Activated naive CD4-positive, alpha-beta T cell treated with anti-CD3 and anti-CD28 coated beads for 36 hours (primary cell): ENCODE measurements at regions of chr12 and their contacts with region 1.

Region 1: GRCh38 chr12:48189331-48190125 is 6.1 kb downstream of the CCDC184 start:
- DNase-seq: peak; percentile 87
- H3K4me3 Mint-ChIP-seq: no peak overlapping the region
- H3K27ac Mint-ChIP-seq: no peak overlapping the region
- H3K4me1 Mint-ChIP-seq: peaks cover 3% of the 10 kb centered on the region
- H3K27me3 Mint-ChIP-seq: peaks cover 13% of the 10 kb centered on the region

Region 2: GRCh38 chr12:47433876-47434275 is 755.7 kb before region 1 on chr12:
- CTCF ChIA-PET with region 1: no interaction called
- intact Hi-C with region 1: no loop called
- DNase-seq: no peak
- H3K4me3 Mint-ChIP-seq: no peak overlapping the region
- H3K27ac Mint-ChIP-seq: no peak overlapping the region
- H3K4me1 Mint-ChIP-seq: peaks cover 2% of the 10 kb centered on the region
- H3K27me3 Mint-ChIP-seq: no peaks in the 10 kb centered on the region

Region 3: DNA sequence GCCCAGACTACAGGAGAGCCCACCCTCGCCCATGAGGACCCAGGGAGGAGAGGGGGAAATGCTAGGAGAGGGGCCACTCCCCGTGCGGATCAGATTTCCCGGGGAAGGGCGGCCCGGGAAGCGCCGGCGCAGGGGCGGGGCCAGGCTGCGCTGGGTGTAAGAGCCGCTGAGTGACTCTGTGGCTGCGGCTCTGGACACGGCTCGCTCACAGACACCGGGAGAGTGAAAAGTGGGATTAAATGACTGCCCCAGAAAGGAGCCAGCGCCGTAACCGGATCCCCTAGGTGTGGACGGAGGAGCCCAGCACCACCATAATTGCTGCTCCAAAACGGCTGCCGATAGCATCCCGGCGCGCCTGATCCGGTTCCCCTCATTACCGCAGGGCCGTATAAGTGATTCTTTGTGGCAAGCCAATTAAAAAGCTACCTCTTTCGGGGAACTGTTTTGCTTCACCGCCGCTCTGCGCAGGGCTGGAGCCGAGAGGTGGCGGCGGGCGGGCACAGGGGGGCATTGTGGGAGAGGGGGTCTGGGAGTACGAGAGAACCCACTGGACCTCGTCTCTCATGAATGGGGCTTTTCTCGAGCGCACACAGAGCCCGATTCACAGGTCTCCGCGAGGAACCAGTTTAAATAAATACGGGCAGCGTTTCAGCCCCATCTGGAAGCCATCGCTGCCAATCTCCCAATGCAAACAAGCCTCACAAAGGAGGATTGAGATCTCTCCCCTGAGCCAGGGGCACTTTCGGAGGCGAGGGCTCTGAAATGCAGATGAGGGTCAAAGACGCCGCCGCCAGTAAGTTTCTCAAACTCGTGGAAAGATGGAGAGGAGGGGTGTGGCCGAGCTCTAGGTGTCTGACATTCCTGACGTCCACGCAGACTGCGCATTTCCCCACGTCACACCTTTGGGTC is 187.8 kb before region 1 on chr12:
- CTCF ChIA-PET with region 1: no interaction called
- intact Hi-C with region 1: loop called (anchors 5 kb)
- DNase-seq: no peak
- H3K4me3 Mint-ChIP-seq: peak overlapping the region; percentile 64
- H3K27ac Mint-ChIP-seq: no peak overlapping the region
- H3K4me1 Mint-ChIP-seq: peaks cover 29% of the 10 kb centered on the region
- H3K27me3 Mint-ChIP-seq: peaks cover 75% of the 10 kb centered on the region

Region 4: DNA sequence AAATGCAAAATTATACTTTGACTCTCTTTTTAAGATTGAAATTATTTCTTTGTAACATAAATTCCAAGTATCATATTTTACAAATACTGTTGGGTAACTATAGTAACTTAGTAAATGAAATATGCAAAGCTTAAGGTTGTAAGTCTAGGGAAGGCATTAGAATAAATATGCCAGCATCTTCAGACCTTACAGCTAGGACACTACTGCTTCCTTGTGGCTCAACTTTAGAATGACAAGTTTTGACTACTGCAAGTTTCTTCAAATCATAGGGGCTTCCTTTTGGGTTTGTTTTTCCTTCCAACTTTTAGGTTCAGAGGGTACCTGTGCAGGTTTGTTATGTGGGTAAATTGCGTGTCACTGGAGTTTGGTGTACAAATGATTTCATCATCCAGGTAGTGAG is 265.1 kb after region 1 on chr12:
- CTCF ChIA-PET with region 1: no interaction called
- intact Hi-C with region 1: loop called (anchors 1 kb)
- DNase-seq: peak; percentile 7
- H3K4me3 Mint-ChIP-seq: no peak overlapping the region
- H3K27ac Mint-ChIP-seq: no peak overlapping the region
- H3K4me1 Mint-ChIP-seq: no peaks in the 10 kb centered on the region
- H3K27me3 Mint-ChIP-seq: peaks cover 7% of the 10 kb centered on the region